CD8-positive, alpha-beta memory T cell (primary cell): ENCODE measurements at regions of chr10 and their contacts with region 1.

Region 1: GRCh38 chr10:12181065-12181775 is 14.5 kb downstream of the NUDT5 start:
- DNase-seq: peak; percentile 46 to 91 (median 60)
- H3K4me3 ChIP-seq: peak overlapping the region; percentile 9
- H3K4me3 Mint-ChIP-seq: peak overlapping the region; percentile 8 to 74 (median 57)
- H3K27ac ChIP-seq: peak overlapping the region; percentile 35
- H3K27ac Mint-ChIP-seq: peak overlapping the region; percentile 92 to 98 (median 94)
- H3K4me1 ChIP-seq: peaks cover 19% of the 10 kb centered on the region
- H3K4me1 Mint-ChIP-seq: peaks cover 25 to 38% (median 36%) of the 10 kb centered on the region in 3 donors
- H3K27me3 ChIP-seq: no peaks in the 10 kb centered on the region
- H3K27me3 Mint-ChIP-seq: no peaks in the 10 kb centered on the region

Region 2: DNA sequence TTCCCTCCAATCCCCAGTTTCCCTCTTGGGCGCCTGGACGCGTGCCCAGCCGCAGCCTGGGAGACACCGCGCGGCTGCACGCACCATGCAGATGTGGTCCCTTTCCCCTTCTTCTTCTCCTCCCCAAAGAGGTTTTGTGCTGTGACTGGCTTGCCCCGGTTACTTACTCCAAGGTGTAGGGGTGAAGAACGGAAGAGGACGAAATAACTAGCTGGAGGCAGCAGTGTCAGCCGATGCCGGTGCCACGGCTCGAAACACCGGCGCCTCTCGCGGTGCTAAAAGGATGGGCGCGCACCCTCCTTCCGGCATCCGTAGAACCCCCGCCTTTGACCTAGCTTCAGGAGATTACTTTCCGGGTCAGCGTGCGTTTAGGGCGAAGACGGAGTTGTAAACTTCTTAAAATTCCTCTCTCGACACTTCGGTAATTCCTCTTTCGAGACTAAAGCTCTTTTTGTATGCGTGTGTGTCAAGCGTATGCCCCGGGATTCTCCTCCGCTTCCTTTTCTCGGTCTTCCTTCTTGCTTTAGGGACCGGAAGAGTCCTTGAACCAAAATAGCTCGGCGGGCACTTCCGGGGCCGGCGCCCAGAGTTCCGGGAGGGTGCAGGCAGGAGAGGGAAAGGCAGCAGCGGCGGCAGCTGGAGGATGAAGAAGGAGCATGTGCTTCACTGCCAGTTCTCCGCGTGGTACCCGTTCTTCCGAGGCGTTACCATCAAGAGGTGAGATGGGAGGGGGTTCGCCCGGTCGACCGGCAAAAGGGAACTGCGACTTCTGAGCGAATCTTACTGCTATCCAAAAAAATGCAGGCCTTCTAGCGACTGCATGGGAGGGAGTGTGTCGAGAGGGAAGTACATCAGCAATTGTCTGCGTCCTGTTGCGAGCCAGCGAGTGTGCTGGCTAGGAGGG is 14.6 kb after region 1 on chr10 and contains the starts of genes CDC123 and NUDT5:
- CTCF ChIA-PET with region 1: interaction called, 20 read pairs
- POLR2A ChIA-PET with region 1: interaction called, 10 read pairs
- DNase-seq: peak; percentile 74 to 89 (median 82)
- H3K4me3 ChIP-seq: peak within 1 kb of the TSS; percentile 100
- H3K4me3 Mint-ChIP-seq: peak within 1 kb of the TSS; percentile 94 to 100 (median 96)
- H3K27ac ChIP-seq: peak within 1 kb of the TSS; percentile 97
- H3K27ac Mint-ChIP-seq: peak within 1 kb of the TSS; percentile 90 to 100 (median 98)
- H3K4me1 ChIP-seq: peaks cover 26% of the 10 kb centered on the region
- H3K4me1 Mint-ChIP-seq: peaks cover 51 to 77% (median 72%) of the 10 kb centered on the region in 3 donors
- H3K27me3 ChIP-seq: no peaks in the 10 kb centered on the region
- H3K27me3 Mint-ChIP-seq: no peaks in the 10 kb centered on the region
- total RNA-seq, gene CDC123: 161 to 162 TPM
- total RNA-seq, gene NUDT5: 119 to 125 TPM